ENCODE measurements at regions of chr3 and their contacts with region 1.

Region 1: GRCh38 chr3:9384141-9384853 is 13.1 kb upstream of the SETD5 start:
- DNase-seq: no peak
- ATAC-seq: no peak
- H3K4me3 ChIP-seq: no peak overlapping the region
- H3K27ac ChIP-seq: no peak overlapping the region
- H3K4me1 ChIP-seq: peaks cover 0 to 12% (median 3%) of the 10 kb centered on the region in 9 donors
- H3K27me3 ChIP-seq: no peaks in the 10 kb centered on the region
- CTCF ChIP-seq: no peak

Region 2: GRCh38 chr3:9330166-9330703 is 54.1 kb before region 1 on chr3:
- intact Hi-C with region 1: no loop called
- DNase-seq: no peak
- ATAC-seq: no peak
- H3K4me3 ChIP-seq: no peak overlapping the region
- H3K27ac ChIP-seq: peak overlapping the region in 1 of 10 donors; percentile 17
- H3K4me1 ChIP-seq: no peaks in the 10 kb centered on the region
- H3K27me3 ChIP-seq: no peaks in the 10 kb centered on the region
- CTCF ChIP-seq: no peak

Region 3: DNA sequence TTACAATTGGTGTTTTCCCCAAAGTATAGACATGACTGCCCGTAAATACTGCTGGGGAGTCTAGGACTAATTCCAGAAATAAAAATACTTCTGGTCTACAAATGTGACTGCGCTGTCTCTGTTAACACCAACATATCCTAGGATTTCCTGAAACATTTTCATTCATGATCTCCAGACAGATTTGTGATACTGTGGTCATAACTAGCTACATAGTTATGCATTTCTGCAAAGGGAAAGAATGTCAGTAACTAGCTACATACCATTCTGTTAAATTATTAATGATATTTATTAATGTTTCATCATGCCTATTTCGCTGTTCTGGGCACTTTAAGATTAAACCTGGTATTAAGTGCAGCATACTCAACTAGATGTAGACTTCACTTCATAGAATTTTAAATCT is 46.4 kb after region 1 on chr3:
- intact Hi-C with region 1: loop called in 6 of 10 experiments (anchors 5 to 10 kb)
- DNase-seq: no peak
- ATAC-seq: no peak
- H3K4me3 ChIP-seq: no peak overlapping the region
- H3K27ac ChIP-seq: no peak overlapping the region
- H3K4me1 ChIP-seq: peaks cover 0 to 31% (median 4%) of the 10 kb centered on the region in 9 donors
- H3K27me3 ChIP-seq: no peaks in the 10 kb centered on the region
- CTCF ChIP-seq: no peak

Region 4: GRCh38 chr3:9452417-9452816 is 68.1 kb after region 1 on chr3:
- intact Hi-C with region 1: loop called in 2 of 10 experiments (anchors 5 to 10 kb)
- DNase-seq: no peak
- ATAC-seq: no peak
- H3K4me3 ChIP-seq: no peak overlapping the region
- H3K27ac ChIP-seq: peak overlapping the region in 1 of 10 donors; percentile 27
- H3K4me1 ChIP-seq: peaks cover 0 to 15% (median 0%) of the 10 kb centered on the region in 9 donors
- H3K27me3 ChIP-seq: no peaks in the 10 kb centered on the region
- CTCF ChIP-seq: no peak

Measured in heart right ventricle (tissue), 16 donors.